Esophagus squamous epithelium (tissue), 5 donors: ENCODE measurements at regions of chr7 and their contacts with region 1.

Region 1: GRCh38 chr7:106056513-106057203 is 55.5 kb downstream of the SYPL1 start:
- DNase-seq: no peak
- H3K4me3 ChIP-seq: no peak overlapping the region
- H3K27ac ChIP-seq: peak overlapping the region in 3 of 4 donors; percentile 37 to 83 (median 68)
- H3K4me1 ChIP-seq: peaks cover 21 to 59% (median 45%) of the 10 kb centered on the region in 3 donors
- H3K27me3 ChIP-seq: no peaks in the 10 kb centered on the region
- CTCF ChIP-seq: peak; percentile 78 to 91 (median 86)
- POLR2A ChIP-seq: no peak

Region 2: GRCh38 chr7:105480931-105481330 is 575.7 kb before region 1 on chr7:
- intact Hi-C with region 1: no loop called
- DNase-seq: no peak
- H3K4me3 ChIP-seq: no peak overlapping the region
- H3K27ac ChIP-seq: no peak overlapping the region
- H3K4me1 ChIP-seq: no peaks in the 10 kb centered on the region
- H3K27me3 ChIP-seq: no peaks in the 10 kb centered on the region
- CTCF ChIP-seq: no peak
- POLR2A ChIP-seq: no peak

Region 3: GRCh38 chr7:106153891-106154449 is 97.3 kb after region 1 on chr7:
- intact Hi-C with region 1: loop called (anchors 2 kb)
- DNase-seq: no peak
- H3K4me3 ChIP-seq: peak overlapping the region in 1 of 4 donors; percentile 12
- H3K27ac ChIP-seq: peak overlapping the region; percentile 35 to 64 (median 47)
- H3K4me1 ChIP-seq: peaks cover 11 to 26% (median 16%) of the 10 kb centered on the region in 3 donors
- H3K27me3 ChIP-seq: no peaks in the 10 kb centered on the region
- CTCF ChIP-seq: peak; percentile 87 to 98 (median 94)
- POLR2A ChIP-seq: no peak